ENCODE measurements at regions of chr13 and their contacts with region 1.

Region 1: GRCh38 chr13:91406619-91407018 is 8.2 kb downstream of the GPC5 start:
- DNase-seq: peak; percentile 31 to 63
- H3K4me3 ChIP-seq: no peak overlapping the region
- H3K27ac ChIP-seq: no peak overlapping the region
- H3K4me1 ChIP-seq: no peaks in the 10 kb centered on the region
- H3K27me3 ChIP-seq: no peaks in the 10 kb centered on the region
- CTCF ChIP-seq: peak; percentile 11 to 73 (median 66)
- EP300 ChIP-seq: peak in 1 of 2 experiments; percentile 73; a peak in 1 of 3 replicates
- POLR2A ChIP-seq: no peak
- RAD21 ChIP-seq: peak; percentile 78 to 87

Region 2: DNA sequence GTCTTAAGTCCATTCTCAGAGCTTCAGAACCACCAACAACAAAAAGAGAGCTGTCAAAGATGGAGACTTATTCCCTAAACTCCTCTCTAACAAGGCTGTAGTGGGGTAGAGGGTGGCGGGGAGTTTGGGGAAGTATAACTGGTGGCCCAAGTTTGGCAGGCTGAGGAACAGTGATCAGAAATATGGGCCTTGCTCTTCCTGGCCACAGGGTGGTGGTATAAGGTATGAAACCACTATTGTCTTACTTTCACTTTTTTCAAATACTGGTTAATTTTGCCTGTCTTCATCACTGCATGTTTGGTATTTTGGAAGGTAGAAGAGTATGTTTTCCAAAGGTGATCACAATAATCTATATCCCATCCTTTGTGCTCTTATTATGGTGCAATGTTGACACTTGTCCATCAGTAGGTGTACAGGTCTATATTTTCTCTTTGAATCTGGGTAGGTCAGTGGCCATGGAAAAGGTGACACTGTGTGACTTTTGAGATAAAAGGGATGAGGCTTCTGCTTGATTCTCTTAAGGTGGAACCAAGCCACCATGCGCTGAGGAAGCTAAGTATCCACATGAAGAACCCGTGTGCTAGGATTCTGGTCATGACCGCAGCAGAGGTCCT is 31.4 kb before region 1 on chr13:
- CTCF ChIA-PET with region 1: interaction called, 27 read pairs
- POLR2A ChIA-PET with region 1: no interaction called
- DNase-seq: no peak
- H3K4me3 ChIP-seq: no peak overlapping the region
- H3K27ac ChIP-seq: no peak overlapping the region
- H3K4me1 ChIP-seq: no peaks in the 10 kb centered on the region; a peak in 2 of 7 replicates
- H3K27me3 ChIP-seq: no peaks in the 10 kb centered on the region
- CTCF ChIP-seq: peak; percentile 40 to 67 (median 58)
- EP300 ChIP-seq: no peak
- POLR2A ChIP-seq: no peak
- RAD21 ChIP-seq: peak; percentile 66 to 71

Region 3: GRCh38 chr13:91381371-91381770 is 25.2 kb before region 1 on chr13:
- CTCF ChIA-PET with region 1: interaction called, 25 read pairs
- POLR2A ChIA-PET with region 1: no interaction called
- DNase-seq: no peak
- H3K4me3 ChIP-seq: no peak overlapping the region
- H3K27ac ChIP-seq: no peak overlapping the region
- H3K4me1 ChIP-seq: no peaks in the 10 kb centered on the region
- H3K27me3 ChIP-seq: no peaks in the 10 kb centered on the region
- CTCF ChIP-seq: peak in 2 of 3 experiments; percentile 33 to 39; a peak in 2 of 4 replicates
- EP300 ChIP-seq: no peak
- POLR2A ChIP-seq: no peak
- RAD21 ChIP-seq: peak; percentile 65 to 66

Region 4: GRCh38 chr13:91417660-91418325 is 11.2 kb after region 1 on chr13:
- CTCF ChIA-PET with region 1: interaction called, 12 read pairs
- POLR2A ChIA-PET with region 1: no interaction called
- DNase-seq: no peak
- H3K4me3 ChIP-seq: no peak overlapping the region
- H3K27ac ChIP-seq: no peak overlapping the region
- H3K4me1 ChIP-seq: no peaks in the 10 kb centered on the region
- H3K27me3 ChIP-seq: no peaks in the 10 kb centered on the region
- CTCF ChIP-seq: no peak
- EP300 ChIP-seq: no peak
- POLR2A ChIP-seq: no peak
- RAD21 ChIP-seq: no peak

Region 5: DNA sequence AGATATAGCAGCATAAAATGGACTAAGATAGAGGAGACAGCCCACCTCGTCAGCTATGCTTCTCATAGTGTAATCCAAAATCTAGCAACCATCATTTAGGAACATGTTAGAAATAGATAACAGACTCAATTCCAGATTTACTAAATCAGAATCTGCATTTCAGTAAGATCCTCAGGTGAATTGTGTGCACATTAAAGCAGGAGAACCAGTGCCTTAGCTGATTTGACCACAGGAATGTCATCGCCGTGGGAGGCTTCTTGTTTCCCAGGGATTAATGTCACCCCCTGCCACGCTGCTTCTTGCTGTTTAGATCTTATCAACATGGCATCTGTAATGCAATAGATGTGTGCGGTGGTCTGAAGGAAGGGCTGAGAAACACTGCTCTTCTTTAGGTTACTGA is 75.8 kb after region 1 on chr13:
- CTCF ChIA-PET with region 1: no interaction called
- POLR2A ChIA-PET with region 1: no interaction called
- DNase-seq: no peak
- H3K4me3 ChIP-seq: no peak overlapping the region
- H3K27ac ChIP-seq: no peak overlapping the region
- H3K4me1 ChIP-seq: no peaks in the 10 kb centered on the region
- H3K27me3 ChIP-seq: no peaks in the 10 kb centered on the region
- CTCF ChIP-seq: no peak
- EP300 ChIP-seq: no peak
- POLR2A ChIP-seq: no peak
- RAD21 ChIP-seq: no peak

Measured in H1 (cell line).